CD4-positive, alpha-beta memory T cell (primary cell): ENCODE measurements at regions of chr2 and their contacts with region 1.

Region 1: GRCh38 chr2:224778474-224778877 is 62.3 kb upstream of the CCDC195 start:
- DNase-seq: peak; percentile 46 to 58 (median 54)
- H3K4me3 ChIP-seq: no peak overlapping the region
- H3K4me3 Mint-ChIP-seq: no peak overlapping the region
- H3K27ac ChIP-seq: no peak overlapping the region
- H3K27ac Mint-ChIP-seq: peak overlapping the region in 3 of 7 donors; percentile 0 to 65 (median 25)
- H3K4me1 ChIP-seq: no peaks in the 10 kb centered on the region
- H3K4me1 Mint-ChIP-seq: peaks cover 0 to 5% (median 0%) of the 10 kb centered on the region in 4 donors
- H3K27me3 ChIP-seq: no peaks in the 10 kb centered on the region
- H3K27me3 Mint-ChIP-seq: no peaks in the 10 kb centered on the region

Region 2: GRCh38 chr2:224532931-224533330 is 245.5 kb before region 1 on chr2:
- CTCF ChIA-PET with region 1: no interaction called
- POLR2A ChIA-PET with region 1: no interaction called
- intact Hi-C with region 1: no loop called
- DNase-seq: no peak
- H3K4me3 ChIP-seq: no peak overlapping the region
- H3K4me3 Mint-ChIP-seq: peak overlapping the region in 1 of 8 donors; percentile 45
- H3K27ac ChIP-seq: no peak overlapping the region
- H3K27ac Mint-ChIP-seq: peak overlapping the region; percentile 14 to 73 (median 48)
- H3K4me1 ChIP-seq: peaks cover 24% of the 10 kb centered on the region
- H3K4me1 Mint-ChIP-seq: peaks cover 44 to 68% (median 51%) of the 10 kb centered on the region in 4 donors
- H3K27me3 ChIP-seq: no peaks in the 10 kb centered on the region
- H3K27me3 Mint-ChIP-seq: no peaks in the 10 kb centered on the region

Region 3: DNA sequence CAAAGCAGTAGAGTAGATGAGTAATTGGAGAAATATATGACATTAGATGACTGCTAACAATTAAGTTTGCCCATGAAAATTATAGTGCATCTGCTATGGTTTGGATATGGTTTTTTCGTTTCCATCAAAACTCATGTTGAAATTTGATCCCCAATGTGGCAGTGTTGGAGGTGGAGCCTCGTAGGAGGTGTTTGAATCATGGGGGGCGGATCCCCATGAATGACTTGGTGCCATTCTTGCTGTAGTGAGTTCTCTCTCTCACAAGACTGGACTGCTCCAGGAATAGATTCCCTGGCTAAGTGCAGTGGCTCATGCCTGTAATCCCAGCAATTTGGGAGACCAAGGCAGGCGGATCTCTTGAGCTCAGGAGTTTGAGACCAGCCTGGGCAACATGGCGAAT is 183.6 kb before region 1 on chr2:
- CTCF ChIA-PET with region 1: no interaction called
- POLR2A ChIA-PET with region 1: no interaction called
- intact Hi-C with region 1: no loop called
- DNase-seq: no peak
- H3K4me3 ChIP-seq: no peak overlapping the region
- H3K4me3 Mint-ChIP-seq: no peak overlapping the region
- H3K27ac ChIP-seq: no peak overlapping the region
- H3K27ac Mint-ChIP-seq: no peak overlapping the region
- H3K4me1 ChIP-seq: no peaks in the 10 kb centered on the region
- H3K4me1 Mint-ChIP-seq: no peaks in the 10 kb centered on the region
- H3K27me3 ChIP-seq: no peaks in the 10 kb centered on the region
- H3K27me3 Mint-ChIP-seq: peaks cover 0 to 8% of the 10 kb centered on the region in 2 donors

Region 4: GRCh38 chr2:224723586-224724217 is 54.8 kb before region 1 on chr2:
- CTCF ChIA-PET with region 1: no interaction called
- POLR2A ChIA-PET with region 1: no interaction called
- intact Hi-C with region 1: no loop called
- DNase-seq: no peak
- H3K4me3 ChIP-seq: no peak overlapping the region
- H3K4me3 Mint-ChIP-seq: no peak overlapping the region
- H3K27ac ChIP-seq: no peak overlapping the region
- H3K27ac Mint-ChIP-seq: no peak overlapping the region
- H3K4me1 ChIP-seq: no peaks in the 10 kb centered on the region
- H3K4me1 Mint-ChIP-seq: no peaks in the 10 kb centered on the region
- H3K27me3 ChIP-seq: no peaks in the 10 kb centered on the region
- H3K27me3 Mint-ChIP-seq: peaks cover 9 to 10% of the 10 kb centered on the region in 2 donors

Region 5: GRCh38 chr2:224764565-224765236 is 13.8 kb before region 1 on chr2:
- CTCF ChIA-PET with region 1: interaction called, 16 read pairs
- POLR2A ChIA-PET with region 1: no interaction called
- intact Hi-C with region 1: no loop called
- DNase-seq: peak in 4 of 5 donors; percentile 22 to 39 (median 28)
- H3K4me3 ChIP-seq: no peak overlapping the region
- H3K4me3 Mint-ChIP-seq: peak overlapping the region in 2 of 8 donors; percentile 48 to 49
- H3K27ac ChIP-seq: peak overlapping the region; percentile 5
- H3K27ac Mint-ChIP-seq: peak overlapping the region in 5 of 7 donors; percentile 24 to 72 (median 49)
- H3K4me1 ChIP-seq: peaks cover 18% of the 10 kb centered on the region
- H3K4me1 Mint-ChIP-seq: peaks cover 16 to 26% (median 21%) of the 10 kb centered on the region in 4 donors
- H3K27me3 ChIP-seq: no peaks in the 10 kb centered on the region
- H3K27me3 Mint-ChIP-seq: no peaks in the 10 kb centered on the region

Region 6: DNA sequence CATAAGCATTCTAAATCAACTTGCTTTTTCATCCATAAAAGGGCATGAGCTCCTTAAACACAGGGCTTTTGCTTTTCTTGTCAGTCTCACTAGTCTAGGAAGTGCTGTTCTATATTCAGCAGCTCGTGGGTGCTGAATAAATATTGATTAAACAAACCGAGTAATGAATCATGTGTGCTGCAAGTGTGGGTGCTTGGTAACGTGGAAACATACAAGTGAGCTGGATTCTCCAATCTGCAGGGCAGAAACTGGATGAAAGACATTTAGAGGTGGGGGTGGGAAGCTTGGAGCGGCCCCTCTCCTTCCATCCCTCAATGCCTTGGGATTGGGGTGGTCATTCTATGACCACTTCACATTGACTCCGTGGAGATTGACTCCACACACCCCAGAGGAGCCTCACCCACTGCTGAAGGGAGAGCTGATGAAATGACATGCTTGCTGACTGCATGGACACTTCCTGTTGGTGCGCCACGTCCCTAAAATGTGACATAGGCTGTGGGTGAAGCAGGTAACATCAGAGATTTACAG is 149.2 kb after region 1 on chr2:
- CTCF ChIA-PET with region 1: no interaction called
- POLR2A ChIA-PET with region 1: no interaction called
- intact Hi-C with region 1: no loop called
- DNase-seq: peak; percentile 83 to 92 (median 85)
- H3K4me3 ChIP-seq: peak overlapping the region in 1 of 2 donors; percentile 12
- H3K4me3 Mint-ChIP-seq: peak overlapping the region; percentile 65 to 72 (median 70)
- H3K27ac ChIP-seq: peak overlapping the region; percentile 63
- H3K27ac Mint-ChIP-seq: peak overlapping the region; percentile 92 to 99 (median 96)
- H3K4me1 ChIP-seq: peaks cover 100% of the 10 kb centered on the region
- H3K4me1 Mint-ChIP-seq: peaks cover 89 to 100% (median 94%) of the 10 kb centered on the region in 4 donors
- H3K27me3 ChIP-seq: no peaks in the 10 kb centered on the region
- H3K27me3 Mint-ChIP-seq: no peaks in the 10 kb centered on the region